Astrocyte of the cerebellum (primary cell): ENCODE measurements at regions of chr22 and their contacts with region 1.

Region 1: DNA sequence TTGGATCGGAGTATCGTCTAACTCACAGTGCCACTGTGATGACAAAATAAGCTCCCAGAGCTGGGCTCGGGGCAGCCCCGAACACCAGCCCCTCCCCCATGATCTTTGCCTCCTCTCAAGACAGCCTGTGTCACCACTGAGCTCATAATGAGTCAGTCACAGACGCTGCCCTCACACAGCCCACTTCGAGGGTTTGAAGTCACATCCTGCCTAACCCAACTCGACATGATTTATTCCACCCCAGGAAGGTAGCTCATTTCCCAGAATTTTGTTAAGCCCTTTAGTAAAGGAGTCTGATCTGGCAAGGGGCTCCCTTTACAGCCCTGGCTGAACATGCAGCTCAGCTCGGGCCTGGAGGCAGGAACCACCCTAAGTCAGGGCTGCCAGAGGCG is 22.8 kb downstream of the MYH9 start:
- DNase-seq: peak; percentile 65
- H3K4me3 ChIP-seq: no peak overlapping the region
- CTCF ChIP-seq: no peak

Region 2: GRCh38 chr22:36287881-36288516 is 77.0 kb before region 1 on chr22:
- in situ Hi-C with region 1: no loop called
- DNase-seq: no peak
- H3K4me3 ChIP-seq: no peak overlapping the region
- CTCF ChIP-seq: no peak

Region 3: GRCh38 chr22:36461669-36462649 is 96.9 kb after region 1 on chr22:
- in situ Hi-C with region 1: loop called (anchors 10 kb)
- DNase-seq: peak; percentile 66
- H3K4me3 ChIP-seq: no peak overlapping the region
- CTCF ChIP-seq: no peak